Activated T-helper 2 cell treated with anti-CD3 and anti-CD28 coated beads, Interferon-gamma antibody, Interleukin-2, Interleukin-4, amounts not matched to agents 10 μg/mL and 5 μg/mL and 100 μg/mL, durations not matched to agents 14 hours and 24 hours and 36 hours (primary cell): ENCODE measurements at regions of chr6 and their contacts with region 1.

Region 1: DNA sequence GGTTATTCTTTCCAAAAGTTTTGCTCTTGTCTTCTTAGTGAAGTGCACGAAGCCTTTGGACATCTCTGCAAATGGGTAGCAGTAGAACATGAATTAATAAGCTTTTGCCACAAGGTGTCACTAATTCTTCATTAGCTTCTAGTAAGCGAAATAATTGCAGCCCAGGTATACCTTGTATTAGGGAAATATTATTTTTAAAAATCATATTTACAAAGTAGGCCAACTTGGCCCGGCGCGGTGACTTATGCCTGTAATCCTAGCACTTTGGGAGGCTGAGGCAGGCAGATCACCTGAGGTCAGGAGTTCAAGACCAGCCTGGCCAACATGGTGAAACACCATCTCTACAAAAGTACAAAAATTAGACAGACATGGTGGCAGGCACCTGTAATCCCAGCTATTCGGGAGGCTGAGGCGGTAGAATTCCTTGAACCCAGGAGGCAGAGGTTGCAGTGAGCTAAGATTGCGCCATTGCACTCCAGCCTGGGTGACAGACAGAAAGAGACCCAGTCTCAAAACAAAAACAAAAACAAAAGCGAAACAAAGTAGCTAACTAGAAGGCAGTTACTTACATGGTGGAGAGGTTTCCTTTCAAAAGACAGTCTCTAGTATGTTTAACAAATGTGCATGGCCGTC is 8.8 kb upstream of the RSPH3 start:
- DNase-seq: no peak
- H3K4me3 Mint-ChIP-seq: no peak overlapping the region
- H3K27ac Mint-ChIP-seq: no peak overlapping the region
- H3K4me1 Mint-ChIP-seq: peaks cover 35% of the 10 kb centered on the region
- H3K27me3 Mint-ChIP-seq: no peaks in the 10 kb centered on the region

Region 2: GRCh38 chr6:159134701-159135364 is 126.1 kb after region 1 on chr6:
- intact Hi-C with region 1: loop called (anchors 1 kb)
- DNase-seq: peak; percentile 64
- H3K4me3 Mint-ChIP-seq: no peak overlapping the region
- H3K27ac Mint-ChIP-seq: no peak overlapping the region
- H3K4me1 Mint-ChIP-seq: peaks cover 4% of the 10 kb centered on the region
- H3K27me3 Mint-ChIP-seq: peaks cover 23% of the 10 kb centered on the region